Activated B cell treated with CpG ODN at 0.5 μM for 24 hours (primary cell): ENCODE measurements at regions of chrX and their contacts with region 1.

Region 1: DNA sequence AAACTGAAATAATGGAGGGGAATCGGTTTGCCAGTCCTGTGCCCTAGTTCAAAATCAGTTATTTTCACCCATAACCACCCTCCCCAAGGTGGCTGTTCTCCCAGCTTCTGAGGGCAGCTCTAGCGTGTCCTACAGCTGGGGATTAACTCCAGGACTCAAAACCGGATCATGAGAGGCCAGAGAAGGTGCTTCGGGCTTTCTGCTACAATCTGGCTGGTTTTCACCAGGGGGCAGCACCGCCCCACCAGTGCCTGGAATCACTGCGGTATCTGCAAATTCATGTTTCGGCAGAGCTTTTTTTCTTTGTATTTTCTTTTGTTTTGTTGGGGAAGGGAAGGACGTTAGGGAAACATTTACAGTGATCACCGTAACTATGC is 28.4 kb downstream of the PDHA1 start:
- DNase-seq: peak; percentile 47
- ATAC-seq: peak; percentile 77
- H3K4me3 Mint-ChIP-seq: peak overlapping the region; percentile 85
- H3K27ac Mint-ChIP-seq: no peak overlapping the region
- H3K4me1 Mint-ChIP-seq: peaks cover 7% of the 10 kb centered on the region
- H3K27me3 Mint-ChIP-seq: no peaks in the 10 kb centered on the region
- CTCF ChIP-seq: no peak

Region 2: GRCh38 chrX:19344661-19345060 is 27.5 kb before region 1 on chrX:
- CTCF ChIA-PET with region 1: no interaction called
- POLR2A ChIA-PET with region 1: no interaction called
- intact Hi-C with region 1: no loop called
- DNase-seq: no peak
- ATAC-seq: no peak
- H3K4me3 Mint-ChIP-seq: peak overlapping the region; percentile 88
- H3K27ac Mint-ChIP-seq: no peak overlapping the region
- H3K4me1 Mint-ChIP-seq: peaks cover 14% of the 10 kb centered on the region
- H3K27me3 Mint-ChIP-seq: peaks cover 1% of the 10 kb centered on the region
- CTCF ChIP-seq: no peak

Region 3: GRCh38 chrX:19535476-19535875 is 163.3 kb after region 1 on chrX:
- CTCF ChIA-PET with region 1: interaction called, 3 read pairs
- POLR2A ChIA-PET with region 1: no interaction called
- intact Hi-C with region 1: loop called (anchors 1 kb)
- DNase-seq: no peak
- ATAC-seq: no peak
- H3K4me3 Mint-ChIP-seq: no peak overlapping the region
- H3K27ac Mint-ChIP-seq: no peak overlapping the region
- H3K4me1 Mint-ChIP-seq: no peaks in the 10 kb centered on the region
- H3K27me3 Mint-ChIP-seq: no peaks in the 10 kb centered on the region
- CTCF ChIP-seq: no peak

Region 4: DNA sequence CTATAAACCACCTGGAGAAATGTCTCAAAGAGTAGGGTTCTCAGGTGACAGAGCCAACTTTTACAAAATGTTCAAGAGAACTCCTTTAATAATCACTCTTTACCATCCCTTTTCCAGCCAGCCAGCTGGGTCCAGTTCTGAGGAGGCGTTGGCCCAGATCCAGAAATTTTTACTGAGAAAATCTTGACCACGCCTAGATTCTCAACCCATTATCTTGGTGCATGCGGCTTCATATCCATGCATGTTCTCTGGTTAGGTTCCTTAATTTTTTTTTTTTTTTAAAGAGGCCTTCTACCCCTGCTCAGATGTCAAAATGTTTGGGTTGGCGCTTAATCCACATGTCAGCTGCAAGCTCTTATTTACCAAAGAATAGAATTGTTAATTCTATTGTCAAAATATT is 756.5 kb after region 1 on chrX:
- CTCF ChIA-PET with region 1: no interaction called
- POLR2A ChIA-PET with region 1: no interaction called
- intact Hi-C with region 1: loop called (anchors 10 kb)
- DNase-seq: no peak
- ATAC-seq: no peak
- H3K4me3 Mint-ChIP-seq: no peak overlapping the region
- H3K27ac Mint-ChIP-seq: no peak overlapping the region
- H3K4me1 Mint-ChIP-seq: no peaks in the 10 kb centered on the region
- H3K27me3 Mint-ChIP-seq: no peaks in the 10 kb centered on the region
- CTCF ChIP-seq: no peak